B cell (primary cell): ENCODE measurements at regions of chr13 and their contacts with region 1.

Region 1: DNA sequence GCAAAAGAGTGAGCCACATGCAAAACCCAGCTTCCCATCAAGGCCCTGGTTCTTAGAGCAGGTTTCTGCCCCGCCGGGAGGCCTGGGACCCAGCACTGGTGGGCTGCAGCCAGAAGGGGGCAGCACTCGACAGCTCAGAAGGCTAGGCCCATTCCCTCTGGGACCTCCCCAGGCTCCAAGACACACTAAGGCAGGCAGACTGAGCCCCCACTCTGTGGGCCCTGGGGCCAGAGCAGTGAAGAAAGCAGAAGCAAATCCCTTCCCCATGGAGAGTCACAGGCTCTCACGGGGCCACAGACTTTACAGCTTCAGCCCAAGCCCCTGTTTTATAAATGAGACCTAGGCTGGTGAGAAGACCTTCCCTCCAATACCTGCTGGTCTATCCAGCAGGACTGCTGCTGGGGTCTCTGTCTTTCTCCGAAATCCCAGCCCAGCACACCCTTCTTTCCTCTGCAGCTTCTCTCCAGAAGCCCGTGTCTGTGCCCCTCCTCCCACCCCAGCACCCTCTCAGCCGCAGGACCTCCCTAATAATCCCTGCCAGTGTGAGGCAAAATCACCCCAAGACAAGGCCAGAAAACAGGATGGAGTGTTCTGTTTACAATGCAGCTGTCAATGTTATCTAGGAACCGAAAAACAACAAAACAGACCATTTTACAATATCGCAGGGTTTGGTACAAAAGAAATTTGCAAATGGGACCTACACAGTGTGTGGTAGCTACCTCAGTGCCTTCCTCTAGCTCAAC is 109.3 kb downstream of the ABCC4 start:
- DNase-seq: peak; percentile 67
- ATAC-seq: peak; percentile 89
- H3K4me3 ChIP-seq: no peak overlapping the region
- H3K4me3 Mint-ChIP-seq: no peak overlapping the region
- H3K27ac ChIP-seq: no peak overlapping the region
- H3K27ac Mint-ChIP-seq: no peak overlapping the region
- H3K4me1 ChIP-seq: no peaks in the 10 kb centered on the region
- H3K4me1 Mint-ChIP-seq: peaks cover 1% of the 10 kb centered on the region
- H3K27me3 ChIP-seq: no peaks in the 10 kb centered on the region
- H3K27me3 Mint-ChIP-seq: no peaks in the 10 kb centered on the region
- CTCF ChIP-seq: peak; percentile 77

Region 2: GRCh38 chr13:95207769-95208366 is 15.9 kb after region 1 on chr13:
- CTCF ChIA-PET with region 1: interaction called, 15 read pairs
- POLR2A ChIA-PET with region 1: no interaction called
- intact Hi-C with region 1: no loop called
- DNase-seq: no peak
- ATAC-seq: peak; percentile 56
- H3K4me3 ChIP-seq: peak overlapping the region in 2 of 5 experiments; percentile 4 to 38
- H3K4me3 Mint-ChIP-seq: peak overlapping the region; percentile 68
- H3K27ac ChIP-seq: no peak overlapping the region
- H3K27ac Mint-ChIP-seq: peak overlapping the region; percentile 42
- H3K4me1 ChIP-seq: peaks cover 6 to 7% of the 10 kb centered on the region in 2 donors
- H3K4me1 Mint-ChIP-seq: peaks cover 12% of the 10 kb centered on the region
- H3K27me3 ChIP-seq: no peaks in the 10 kb centered on the region
- H3K27me3 Mint-ChIP-seq: no peaks in the 10 kb centered on the region
- CTCF ChIP-seq: no peak

Region 3: DNA sequence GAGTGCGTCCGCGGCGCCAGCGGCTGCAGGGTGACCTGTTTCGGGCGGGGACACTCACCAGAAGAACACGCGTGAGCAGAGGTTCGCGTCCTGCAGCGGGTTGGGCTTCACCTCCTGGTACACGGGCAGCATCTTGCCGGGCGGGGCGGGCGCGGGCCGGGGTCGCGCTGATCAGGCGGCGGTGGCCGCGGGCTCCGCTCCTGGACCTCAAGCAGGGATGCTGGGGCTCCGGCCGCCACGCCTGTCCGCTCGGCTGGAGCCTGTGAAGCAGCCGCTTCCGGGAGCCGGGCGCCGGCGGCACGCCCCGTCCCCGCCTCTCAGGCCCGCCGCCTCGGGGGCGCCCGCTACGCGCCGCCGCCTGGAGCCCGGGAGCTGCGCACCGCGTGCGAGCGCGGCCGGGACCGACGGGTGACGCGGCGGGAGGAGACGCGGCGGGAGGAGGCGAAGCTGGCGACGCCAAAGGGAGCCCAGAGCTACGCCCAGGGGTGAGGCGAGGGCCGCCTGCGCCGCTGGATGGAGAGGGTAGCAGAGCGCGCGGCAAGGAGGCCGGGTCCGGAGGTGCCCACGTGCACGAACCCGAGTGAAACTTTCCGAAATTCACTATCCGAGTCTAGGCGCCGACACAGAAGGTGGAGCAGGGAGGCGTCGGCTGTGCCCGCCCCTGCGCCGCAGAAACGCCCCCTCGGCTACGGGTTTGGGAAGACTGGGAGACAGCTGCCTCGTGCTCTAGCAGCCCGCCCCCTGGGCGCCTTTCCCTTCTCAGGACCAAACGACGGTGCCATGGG is 109.4 kb after region 1 on chr13 and contains the start of gene ABCC4:
- CTCF ChIA-PET with region 1: interaction called, 23 read pairs
- POLR2A ChIA-PET with region 1: no interaction called
- intact Hi-C with region 1: loop called (anchors 2 kb)
- DNase-seq: peak; percentile 69
- ATAC-seq: peak; percentile 75
- H3K4me3 ChIP-seq: peak within 1 kb of the TSS; percentile 2 to 80 (median 63)
- H3K4me3 Mint-ChIP-seq: peak within 1 kb of the TSS; percentile 85
- H3K27ac ChIP-seq: no peak within 1 kb of the TSS
- H3K27ac Mint-ChIP-seq: peak within 1 kb of the TSS; percentile 53
- H3K4me1 ChIP-seq: peaks cover 12 to 18% of the 10 kb centered on the region in 2 donors
- H3K4me1 Mint-ChIP-seq: peaks cover 22% of the 10 kb centered on the region
- H3K27me3 ChIP-seq: peaks cover 0 to 9% (median 0%) of the 10 kb centered on the region in 4 experiments
- H3K27me3 Mint-ChIP-seq: no peaks in the 10 kb centered on the region
- CTCF ChIP-seq: no peak
- total RNA-seq, gene ABCC4: 7.1 and 7.3 TPM in 2 replicates

Region 4: DNA sequence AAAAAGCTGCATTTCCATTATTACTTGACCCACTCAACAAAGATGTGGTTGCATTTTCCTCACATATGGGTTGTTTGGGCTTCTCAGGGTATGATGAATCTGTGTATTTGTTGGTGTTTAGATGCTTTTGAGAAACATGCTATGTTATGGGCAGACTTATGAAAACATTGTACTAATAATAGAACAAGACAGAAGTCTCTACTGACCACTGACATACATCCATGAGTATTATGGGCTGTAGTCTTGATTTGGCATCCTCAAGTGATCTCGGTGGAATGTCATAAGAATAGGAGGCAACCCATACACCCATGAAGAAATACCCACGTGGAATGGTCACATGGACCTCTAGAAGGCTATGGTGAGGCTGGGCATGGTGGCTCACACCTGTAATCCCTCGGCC is 145.6 kb after region 1 on chr13:
- CTCF ChIA-PET with region 1: no interaction called
- POLR2A ChIA-PET with region 1: no interaction called
- intact Hi-C with region 1: no loop called
- DNase-seq: no peak
- ATAC-seq: no peak
- H3K4me3 ChIP-seq: no peak overlapping the region
- H3K4me3 Mint-ChIP-seq: no peak overlapping the region
- H3K27ac ChIP-seq: no peak overlapping the region
- H3K27ac Mint-ChIP-seq: no peak overlapping the region
- H3K4me1 ChIP-seq: no peaks in the 10 kb centered on the region
- H3K4me1 Mint-ChIP-seq: no peaks in the 10 kb centered on the region
- H3K27me3 ChIP-seq: no peaks in the 10 kb centered on the region
- H3K27me3 Mint-ChIP-seq: peaks cover 4% of the 10 kb centered on the region
- CTCF ChIP-seq: no peak

Region 5: GRCh38 chr13:95387733-95388207 is 195.8 kb after region 1 on chr13:
- CTCF ChIA-PET with region 1: interaction called, 212 read pairs
- POLR2A ChIA-PET with region 1: no interaction called
- intact Hi-C with region 1: no loop called
- DNase-seq: no peak
- ATAC-seq: no peak
- H3K4me3 ChIP-seq: no peak overlapping the region
- H3K4me3 Mint-ChIP-seq: no peak overlapping the region
- H3K27ac ChIP-seq: no peak overlapping the region
- H3K27ac Mint-ChIP-seq: no peak overlapping the region
- H3K4me1 ChIP-seq: peaks cover 17 to 23% of the 10 kb centered on the region in 2 donors
- H3K4me1 Mint-ChIP-seq: peaks cover 24% of the 10 kb centered on the region
- H3K27me3 ChIP-seq: peaks cover 0 to 59% (median 40%) of the 10 kb centered on the region in 4 experiments
- H3K27me3 Mint-ChIP-seq: peaks cover 62% of the 10 kb centered on the region
- CTCF ChIP-seq: no peak

Region 6: DNA sequence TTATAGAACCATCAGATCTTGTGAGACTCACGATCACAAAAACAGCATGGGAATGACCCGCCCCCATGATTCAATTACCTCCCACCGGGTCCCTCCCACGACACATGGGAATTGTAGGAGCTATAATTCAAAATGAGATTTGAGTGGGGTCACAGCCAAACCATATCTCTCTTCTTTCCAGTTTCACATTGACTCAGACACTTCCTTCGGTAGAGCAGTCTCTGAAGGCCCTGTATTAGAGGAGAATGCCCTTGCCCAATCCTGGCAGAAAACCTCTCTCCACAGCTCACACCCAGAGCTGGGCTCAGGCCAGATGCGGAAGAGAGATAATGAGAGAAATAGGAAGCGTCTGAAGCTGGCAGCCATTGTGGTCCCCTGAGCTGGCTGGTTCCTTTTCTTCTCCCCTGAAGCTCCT is 288.1 kb after region 1 on chr13:
- CTCF ChIA-PET with region 1: interaction called, 18 read pairs
- POLR2A ChIA-PET with region 1: no interaction called
- intact Hi-C with region 1: no loop called
- DNase-seq: no peak
- ATAC-seq: no peak
- H3K4me3 ChIP-seq: no peak overlapping the region
- H3K4me3 Mint-ChIP-seq: no peak overlapping the region
- H3K27ac ChIP-seq: no peak overlapping the region
- H3K27ac Mint-ChIP-seq: no peak overlapping the region
- H3K4me1 ChIP-seq: peaks cover 0 to 10% of the 10 kb centered on the region in 2 donors
- H3K4me1 Mint-ChIP-seq: peaks cover 10% of the 10 kb centered on the region
- H3K27me3 ChIP-seq: peaks cover 0 to 7% (median 0%) of the 10 kb centered on the region in 4 experiments
- H3K27me3 Mint-ChIP-seq: peaks cover 10% of the 10 kb centered on the region
- CTCF ChIP-seq: no peak